ENCODE measurements at regions of chr14 and their contacts with region 1.

Region 1: GRCh38 chr14:24271134-24271833 is at the start of gene RABGGTA:
- DNase-seq: peak; percentile 89 to 94 (median 90)
- ATAC-seq: peak; percentile 91 to 96 (median 95)
- H3K4me3 ChIP-seq: peak within 1 kb of the TSS; percentile 67 to 98 (median 86)
- H3K27ac ChIP-seq: peak within 1 kb of the TSS; percentile 88 to 99 (median 98)
- H3K4me1 ChIP-seq: peaks cover 0 to 47% (median 12%) of the 10 kb centered on the region in 12 donors
- H3K27me3 ChIP-seq: no peaks in the 10 kb centered on the region
- CTCF ChIP-seq: peak; percentile 60 to 95 (median 78)
- POLR2A ChIP-seq: peak in 1 of 2 donors; percentile 71
- total RNA-seq, gene RABGGTA: 18.8 to 33.1 (median 26.7) TPM

Region 2: DNA sequence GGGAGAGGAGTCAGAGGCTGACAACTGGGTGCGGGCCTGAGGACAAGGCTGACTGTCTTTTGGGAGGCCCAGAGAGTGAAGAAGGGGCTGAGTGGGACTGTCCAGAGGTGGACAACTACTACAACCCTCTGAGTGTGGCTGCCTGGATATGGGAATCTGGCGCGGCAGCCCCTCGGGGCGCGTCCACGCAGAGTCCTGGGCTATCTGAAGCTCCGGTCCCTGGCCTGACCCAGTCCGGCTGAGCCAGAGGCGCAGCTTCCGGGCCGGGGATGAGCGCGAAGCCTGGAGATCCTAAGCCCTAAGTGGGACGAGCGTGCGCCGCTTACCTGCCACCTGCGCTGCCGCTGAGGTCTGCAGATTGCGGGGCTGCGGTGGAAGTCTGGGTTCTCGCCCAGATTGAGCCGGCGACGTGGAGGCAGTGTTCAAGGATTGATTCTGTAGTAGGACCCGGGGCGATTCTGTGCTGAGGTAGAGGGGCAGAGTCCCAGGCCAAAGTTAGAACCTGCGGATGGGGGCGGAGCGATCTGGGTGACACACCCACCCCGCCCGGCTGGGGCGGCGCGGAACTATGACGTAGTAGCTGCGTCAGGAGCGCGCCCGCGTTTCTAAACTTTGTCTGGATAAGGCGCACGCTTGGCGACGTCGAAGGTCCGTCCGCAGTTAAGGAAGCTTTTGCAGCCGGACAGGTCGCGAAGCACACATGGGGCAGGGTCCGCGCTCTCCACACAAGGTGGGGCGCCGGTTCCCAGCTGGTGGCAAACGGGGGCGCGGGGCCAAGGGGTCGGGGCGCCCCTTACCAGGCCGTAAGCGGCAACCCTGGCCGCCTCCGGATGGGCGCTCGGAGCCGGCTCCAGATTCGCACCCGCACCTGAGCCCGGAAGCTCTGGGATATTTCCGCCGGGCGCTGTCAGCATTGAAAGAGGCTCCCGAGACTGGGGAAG is 28.2 kb after region 1 on chr14 and contains the starts of genes DHRS1 and NOP9:
- intact Hi-C with region 1: loop called in 1 of 10 experiments (anchors 1 kb)
- DNase-seq: peak; percentile 90 to 96 (median 92)
- ATAC-seq: peak; percentile 83 to 94 (median 92)
- H3K4me3 ChIP-seq: peak within 1 kb of the TSS; percentile 75 to 99 (median 95)
- H3K27ac ChIP-seq: peak within 1 kb of the TSS; percentile 1 to 91 (median 80)
- H3K4me1 ChIP-seq: peaks cover 0 to 40% (median 24%) of the 10 kb centered on the region in 12 donors
- H3K27me3 ChIP-seq: no peaks in the 10 kb centered on the region
- CTCF ChIP-seq: no peak
- POLR2A ChIP-seq: peak in 1 of 2 donors; percentile 55
- total RNA-seq, gene DHRS1: 6.3 to 18.1 (median 11.3) TPM
- total RNA-seq, gene NOP9: 22.1 to 34.0 (median 27.8) TPM

Region 3: DNA sequence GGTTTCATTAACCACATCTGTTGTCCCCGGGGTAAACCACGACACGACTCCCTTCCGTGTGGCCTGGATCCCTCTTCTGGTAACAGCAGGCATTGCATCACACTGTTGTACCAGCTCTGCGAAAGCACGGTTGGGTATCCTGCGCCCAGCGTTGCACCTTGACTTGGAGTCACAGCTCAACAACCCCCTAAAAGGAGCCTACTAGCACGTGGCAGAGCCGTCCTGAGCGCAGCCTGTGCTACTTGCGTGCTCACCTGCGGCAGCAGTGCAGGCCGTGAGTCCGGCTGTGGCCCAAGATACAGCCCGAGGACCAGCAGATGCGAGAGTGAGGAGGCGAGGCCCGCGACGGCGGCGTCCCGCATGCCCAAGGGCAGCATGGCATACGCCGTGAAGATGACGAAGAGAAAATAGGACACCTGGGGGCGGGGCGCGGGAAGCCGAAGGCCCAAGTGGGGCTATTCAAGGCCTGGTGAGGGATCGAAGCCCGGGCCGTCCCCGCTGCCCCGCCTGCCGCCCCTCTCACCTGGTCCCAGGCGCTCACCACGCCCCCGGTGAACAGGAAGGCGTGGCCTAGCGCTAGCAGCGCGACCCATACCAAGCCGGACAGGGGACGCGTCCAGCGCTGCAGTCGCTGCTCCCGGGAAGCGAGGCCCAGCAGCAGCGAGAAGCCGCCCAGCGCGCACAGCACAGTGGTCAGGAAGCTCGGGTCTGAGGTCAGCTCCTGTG is 61.1 kb after region 1 on chr14:
- intact Hi-C with region 1: no loop called
- DNase-seq: peak in 4 of 5 donors; percentile 64 to 71 (median 68)
- ATAC-seq: peak; percentile 9 to 60 (median 52)
- H3K4me3 ChIP-seq: peak overlapping the region in 10 of 12 donors; percentile 3 to 93 (median 74)
- H3K27ac ChIP-seq: peak overlapping the region in 2 of 12 donors; percentile 87 to 96
- H3K4me1 ChIP-seq: peaks cover 6 to 95% (median 36%) of the 10 kb centered on the region in 12 donors
- H3K27me3 ChIP-seq: peaks cover 0 to 37% (median 14%) of the 10 kb centered on the region in 9 donors
- CTCF ChIP-seq: peak; percentile 48 to 76 (median 65)
- POLR2A ChIP-seq: no peak

Measured in heart left ventricle (tissue), 16 donors.